Mammary epithelial cell (primary cell): ENCODE measurements at regions of chr1 and their contacts with region 1.

Region 1: DNA sequence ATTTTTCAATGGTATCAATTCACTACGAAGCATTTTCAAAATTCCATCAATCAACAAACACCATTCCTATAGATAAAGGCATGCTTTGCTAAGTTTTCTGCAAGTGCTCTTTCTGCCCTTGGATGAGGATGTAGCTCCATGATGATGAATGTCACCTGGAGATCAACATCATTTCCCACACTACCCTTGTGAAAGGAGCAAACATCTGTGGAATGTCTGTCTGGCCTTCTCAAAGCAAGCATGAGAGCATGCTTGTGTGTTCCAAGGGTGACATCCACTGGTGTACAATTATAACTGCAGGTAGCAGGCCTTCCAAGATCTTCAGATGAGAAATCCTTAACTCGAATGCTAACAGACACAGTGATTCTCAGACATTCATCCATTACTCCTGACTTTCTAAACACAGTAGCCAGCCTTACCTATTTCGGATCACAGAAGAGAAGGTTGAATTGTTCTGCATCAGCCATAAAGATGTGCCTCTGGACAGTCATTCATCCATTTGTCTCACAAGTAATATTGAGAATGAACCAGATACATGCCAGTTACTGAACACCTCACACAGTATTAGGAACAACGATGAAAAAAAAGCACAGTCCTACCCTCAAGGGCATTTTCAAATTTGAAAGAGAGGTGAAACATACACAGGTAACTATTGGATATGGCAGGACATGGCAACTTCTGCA is 162.4 kb downstream of the TPR start:
- DNase-seq: peak; percentile 74
- H3K4me3 ChIP-seq: no peak overlapping the region
- H3K27ac ChIP-seq: no peak overlapping the region
- H3K4me1 ChIP-seq: peaks cover 22% of the 10 kb centered on the region
- H3K27me3 ChIP-seq: no peaks in the 10 kb centered on the region
- CTCF ChIP-seq: peak; percentile 90 to 92

Region 2: DNA sequence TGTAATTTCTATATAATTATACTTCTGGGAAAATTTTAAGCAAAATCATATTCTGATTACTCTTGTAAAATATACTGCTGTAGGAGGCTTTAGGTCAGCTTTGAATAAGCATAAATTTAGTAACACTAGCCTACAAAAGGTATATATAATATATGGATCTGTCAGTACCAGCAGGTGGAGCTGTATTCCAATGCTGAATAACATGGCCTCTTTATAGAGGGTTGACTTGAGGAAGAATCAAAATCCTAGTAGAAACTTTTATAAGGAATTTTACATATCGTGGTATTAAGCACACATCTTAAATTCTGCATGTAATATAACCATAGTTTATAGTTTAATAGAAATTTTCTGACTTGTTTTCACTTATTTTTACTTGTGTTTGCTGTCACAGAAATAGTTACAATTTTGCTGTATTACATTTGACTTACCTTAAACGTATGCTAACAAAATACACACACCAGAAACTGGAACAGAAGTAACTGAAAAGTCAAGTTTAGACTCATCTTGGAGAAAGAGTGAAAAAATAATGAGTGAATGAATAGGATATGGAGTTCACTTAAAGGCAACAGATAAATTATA is 399.2 kb before region 1 on chr1:
- CTCF ChIA-PET with region 1: no interaction called
- dilution Hi-C with region 1: no loop called
- in situ Hi-C with region 1: loop called (anchors 5 to 10 kb)
- intact Hi-C with region 1: loop called (anchors 1 kb)
- DNase-seq: peak; percentile 45
- H3K4me3 ChIP-seq: no peak overlapping the region
- H3K27ac ChIP-seq: no peak overlapping the region
- H3K4me1 ChIP-seq: no peaks in the 10 kb centered on the region
- H3K27me3 ChIP-seq: no peaks in the 10 kb centered on the region
- CTCF ChIP-seq: peak; percentile 61 to 67

Region 3: GRCh38 chr1:185996211-185996610 is 216.5 kb before region 1 on chr1:
- CTCF ChIA-PET with region 1: interaction called, 3 read pairs
- dilution Hi-C with region 1: no loop called
- in situ Hi-C with region 1: no loop called
- intact Hi-C with region 1: loop called (anchors 5 kb)
- DNase-seq: peak; percentile 93
- H3K4me3 ChIP-seq: no peak overlapping the region
- H3K27ac ChIP-seq: no peak overlapping the region
- H3K4me1 ChIP-seq: peaks cover 8% of the 10 kb centered on the region
- H3K27me3 ChIP-seq: no peaks in the 10 kb centered on the region
- CTCF ChIP-seq: no peak

Region 4: DNA sequence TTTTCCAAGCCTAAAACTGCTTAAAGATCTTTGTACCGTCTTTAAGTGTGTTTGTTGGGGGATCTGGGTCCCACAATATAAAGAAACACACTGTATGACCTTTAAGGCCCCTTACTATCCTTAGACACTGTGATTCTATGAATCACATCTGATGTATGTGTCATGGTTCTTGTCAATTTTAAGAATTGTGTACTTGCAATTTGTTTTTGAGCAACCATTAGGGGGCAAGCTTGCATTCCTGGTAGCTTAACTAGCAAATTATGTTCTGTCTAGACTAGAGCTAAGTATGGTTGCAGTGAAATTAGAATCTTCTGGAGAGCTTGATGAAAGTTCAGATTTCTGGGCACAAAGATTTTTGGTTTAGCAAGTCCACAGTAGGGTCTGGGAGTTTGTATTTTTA is 57.1 kb before region 1 on chr1:
- CTCF ChIA-PET with region 1: no interaction called
- dilution Hi-C with region 1: no loop called
- in situ Hi-C with region 1: no loop called
- intact Hi-C with region 1: loop called (anchors 1 kb)
- DNase-seq: peak; percentile 71
- H3K4me3 ChIP-seq: no peak overlapping the region
- H3K27ac ChIP-seq: no peak overlapping the region
- H3K4me1 ChIP-seq: peaks cover 37% of the 10 kb centered on the region
- H3K27me3 ChIP-seq: no peaks in the 10 kb centered on the region
- CTCF ChIP-seq: peak; percentile 76 to 79

Region 5: GRCh38 chr1:186255266-186255665 is 42.6 kb after region 1 on chr1:
- CTCF ChIA-PET with region 1: no interaction called
- dilution Hi-C with region 1: no loop called
- in situ Hi-C with region 1: no loop called
- intact Hi-C with region 1: no loop called
- DNase-seq: no peak
- H3K4me3 ChIP-seq: no peak overlapping the region
- H3K27ac ChIP-seq: no peak overlapping the region
- H3K4me1 ChIP-seq: no peaks in the 10 kb centered on the region
- H3K27me3 ChIP-seq: peaks cover 3% of the 10 kb centered on the region
- CTCF ChIP-seq: no peak

Region 6: GRCh38 chr1:186884251-186884650 is 671.6 kb after region 1 on chr1:
- CTCF ChIA-PET with region 1: no interaction called
- dilution Hi-C with region 1: no loop called
- in situ Hi-C with region 1: no loop called
- intact Hi-C with region 1: no loop called
- DNase-seq: no peak
- H3K4me3 ChIP-seq: no peak overlapping the region
- H3K27ac ChIP-seq: no peak overlapping the region
- H3K4me1 ChIP-seq: peaks cover 7% of the 10 kb centered on the region
- H3K27me3 ChIP-seq: no peaks in the 10 kb centered on the region
- CTCF ChIP-seq: no peak